ENCODE measurements at regions of chr12 and their contacts with region 1.

Region 1: DNA sequence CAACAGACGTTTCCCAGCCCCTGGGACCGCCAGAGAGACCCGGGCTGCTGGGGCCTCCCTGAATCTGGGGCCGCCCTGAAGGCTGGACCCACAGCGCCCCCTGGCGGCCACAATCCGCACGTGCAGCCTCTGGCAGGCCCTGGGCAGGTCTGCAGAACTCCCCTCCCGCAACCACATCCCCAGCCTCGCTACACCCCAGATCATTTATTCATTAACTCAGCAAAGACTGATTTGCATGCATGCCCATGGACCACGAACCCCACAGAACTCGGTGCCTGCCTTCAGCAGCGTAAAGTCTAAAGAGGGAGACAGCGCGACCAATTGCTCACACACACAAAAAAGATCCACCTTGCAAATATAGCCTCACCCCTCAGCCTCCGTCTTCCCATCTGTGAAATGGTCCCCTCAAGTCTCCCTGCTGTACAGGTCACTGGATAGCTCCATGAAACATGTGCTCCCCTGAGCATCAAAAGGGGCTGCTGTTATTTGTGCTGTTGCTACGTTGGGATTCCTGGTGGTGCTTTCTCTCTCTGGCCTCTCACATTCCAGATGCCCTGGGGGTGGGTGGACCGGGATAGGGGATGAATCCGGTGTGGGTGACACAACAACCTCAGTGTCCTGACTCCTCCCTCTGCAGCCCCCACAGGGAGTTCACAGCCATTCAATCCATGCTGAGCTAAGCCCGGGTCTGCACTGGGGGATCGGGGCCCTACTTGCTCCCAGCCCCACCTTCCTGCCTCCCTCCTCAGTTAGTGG is 96.4 kb downstream of the SCARB1 start:
- DNase-seq: peak; percentile 65
- H3K4me3 Mint-ChIP-seq: no peak overlapping the region
- H3K27ac Mint-ChIP-seq: no peak overlapping the region
- H3K4me1 Mint-ChIP-seq: peaks cover 18% of the 10 kb centered on the region
- H3K27me3 Mint-ChIP-seq: no peaks in the 10 kb centered on the region
- CTCF ChIP-seq: peak; percentile 98

Region 2: GRCh38 chr12:124044809-124045321 is 722.4 kb before region 1 on chr12:
- CTCF ChIA-PET with region 1: interaction called, 10 read pairs
- POLR2A ChIA-PET with region 1: no interaction called
- intact Hi-C with region 1: no loop called
- DNase-seq: no peak
- H3K4me3 Mint-ChIP-seq: no peak overlapping the region
- H3K27ac Mint-ChIP-seq: no peak overlapping the region
- H3K4me1 Mint-ChIP-seq: peaks cover 5% of the 10 kb centered on the region
- H3K27me3 Mint-ChIP-seq: no peaks in the 10 kb centered on the region
- CTCF ChIP-seq: no peak

Region 3: DNA sequence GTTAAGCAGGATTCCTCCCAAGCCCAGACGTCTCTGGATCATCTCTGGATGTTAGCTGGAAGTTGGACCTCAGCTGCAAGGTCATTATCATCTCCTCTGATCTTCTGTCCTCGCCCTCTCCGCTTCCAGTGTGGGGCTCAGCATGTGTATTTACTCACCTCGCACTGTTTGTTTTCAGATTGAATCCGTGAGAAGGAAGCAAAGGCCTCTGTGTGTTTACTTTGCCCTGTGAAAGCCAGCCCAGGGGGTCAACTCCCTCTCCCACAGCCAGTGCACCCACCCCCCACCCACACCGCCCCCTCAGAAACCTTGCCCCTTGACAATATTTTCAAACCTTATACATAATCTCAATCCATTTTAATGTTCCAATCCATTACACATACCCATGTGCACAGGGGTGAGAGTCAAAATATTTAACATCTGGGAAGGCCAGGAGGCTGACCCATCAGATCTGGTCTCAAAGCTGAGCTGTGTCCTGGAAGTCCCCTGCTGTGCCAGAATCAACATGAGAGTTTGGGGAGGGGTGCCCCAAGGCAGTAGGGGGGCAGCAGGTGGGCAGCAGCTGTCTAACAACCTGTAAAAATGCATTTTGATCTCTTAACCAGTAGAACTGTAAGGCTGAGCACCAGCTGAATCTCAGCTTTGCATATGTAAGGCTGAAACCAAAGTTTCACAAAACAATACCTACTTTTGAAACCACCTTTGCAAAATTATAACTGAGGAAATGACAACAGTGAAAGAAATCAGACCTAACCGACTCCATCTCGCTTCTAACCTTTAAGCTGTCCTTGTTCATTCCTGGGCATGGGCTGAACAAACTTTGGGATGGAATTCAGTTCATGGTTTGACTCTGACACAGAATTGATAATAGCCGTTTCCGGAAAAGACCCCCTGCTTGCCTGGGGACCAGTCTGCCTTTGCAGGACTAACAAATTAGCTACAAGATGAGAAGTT is 636.2 kb before region 1 on chr12:
- CTCF ChIA-PET with region 1: no interaction called
- POLR2A ChIA-PET with region 1: no interaction called
- intact Hi-C with region 1: no loop called
- DNase-seq: no peak
- H3K4me3 Mint-ChIP-seq: no peak overlapping the region
- H3K27ac Mint-ChIP-seq: no peak overlapping the region
- H3K4me1 Mint-ChIP-seq: peaks cover under 1% of the 10 kb centered on the region
- H3K27me3 Mint-ChIP-seq: no peaks in the 10 kb centered on the region
- CTCF ChIP-seq: no peak

Region 4: GRCh38 chr12:124388679-124389536 is 378.3 kb before region 1 on chr12:
- CTCF ChIA-PET with region 1: interaction called, 5 read pairs
- POLR2A ChIA-PET with region 1: interaction called, 3 read pairs
- intact Hi-C with region 1: loop called (anchors 10 kb)
- DNase-seq: peak; percentile 83
- H3K4me3 Mint-ChIP-seq: peak overlapping the region; percentile 81
- H3K27ac Mint-ChIP-seq: peak overlapping the region; percentile 69
- H3K4me1 Mint-ChIP-seq: peaks cover 26% of the 10 kb centered on the region
- H3K27me3 Mint-ChIP-seq: no peaks in the 10 kb centered on the region
- CTCF ChIP-seq: no peak

Region 5: GRCh38 chr12:124518051-124518932 is 249.0 kb before region 1 on chr12:
- CTCF ChIA-PET with region 1: interaction called, 10 read pairs
- POLR2A ChIA-PET with region 1: interaction called, 17 read pairs
- intact Hi-C with region 1: loop called (anchors 5 kb)
- DNase-seq: peak; percentile 99
- H3K4me3 Mint-ChIP-seq: peak overlapping the region; percentile 91
- H3K27ac Mint-ChIP-seq: peak overlapping the region; percentile 96
- H3K4me1 Mint-ChIP-seq: peaks cover 39% of the 10 kb centered on the region
- H3K27me3 Mint-ChIP-seq: no peaks in the 10 kb centered on the region
- CTCF ChIP-seq: no peak

Region 6: DNA sequence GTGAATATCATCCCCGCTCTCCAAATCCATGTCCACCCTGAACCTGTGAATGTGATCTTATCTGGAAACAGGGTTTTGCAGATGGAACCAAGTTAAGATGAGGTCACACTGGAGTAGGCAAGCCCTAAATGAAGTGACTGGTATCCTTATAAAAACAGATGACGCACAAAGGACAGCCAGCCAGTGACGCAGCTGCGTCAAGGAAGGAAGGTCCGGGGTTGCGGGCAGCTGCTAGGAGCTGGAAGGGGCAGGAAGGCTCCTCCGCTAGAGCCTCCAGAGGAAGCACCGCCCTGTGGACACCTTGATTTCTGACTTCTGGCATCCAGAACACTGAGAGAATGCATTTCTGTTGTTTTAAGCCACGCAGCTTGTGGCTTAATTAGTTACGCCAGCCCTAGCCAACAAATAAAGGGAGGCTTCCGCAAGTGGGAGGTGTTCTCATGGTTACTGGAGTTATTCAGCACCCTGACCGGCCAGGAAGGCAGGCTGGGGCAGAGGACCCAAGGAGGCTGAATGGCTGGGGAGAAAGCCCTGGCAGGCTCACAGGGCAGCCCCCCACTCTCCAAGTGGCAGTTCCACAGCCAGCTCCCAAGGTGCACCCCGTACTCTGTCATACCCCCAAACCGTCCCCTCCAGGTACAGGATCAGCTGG is 72.3 kb before region 1 on chr12:
- CTCF ChIA-PET with region 1: interaction called, 11 read pairs
- POLR2A ChIA-PET with region 1: interaction called, 4 read pairs
- intact Hi-C with region 1: no loop called
- DNase-seq: peak; percentile 77
- H3K4me3 Mint-ChIP-seq: peak overlapping the region; percentile 14
- H3K27ac Mint-ChIP-seq: no peak overlapping the region
- H3K4me1 Mint-ChIP-seq: peaks cover 19% of the 10 kb centered on the region
- H3K27me3 Mint-ChIP-seq: no peaks in the 10 kb centered on the region
- CTCF ChIP-seq: no peak

Region 7: GRCh38 chr12:124754949-124755800 is 12.1 kb before region 1 on chr12:
- CTCF ChIA-PET with region 1: interaction called, 36 read pairs
- POLR2A ChIA-PET with region 1: interaction called, 23 read pairs
- intact Hi-C with region 1: no loop called
- DNase-seq: peak; percentile 90
- H3K4me3 Mint-ChIP-seq: peak overlapping the region; percentile 56
- H3K27ac Mint-ChIP-seq: peak overlapping the region; percentile 57
- H3K4me1 Mint-ChIP-seq: peaks cover 42% of the 10 kb centered on the region
- H3K27me3 Mint-ChIP-seq: no peaks in the 10 kb centered on the region
- CTCF ChIP-seq: no peak

Region 8: DNA sequence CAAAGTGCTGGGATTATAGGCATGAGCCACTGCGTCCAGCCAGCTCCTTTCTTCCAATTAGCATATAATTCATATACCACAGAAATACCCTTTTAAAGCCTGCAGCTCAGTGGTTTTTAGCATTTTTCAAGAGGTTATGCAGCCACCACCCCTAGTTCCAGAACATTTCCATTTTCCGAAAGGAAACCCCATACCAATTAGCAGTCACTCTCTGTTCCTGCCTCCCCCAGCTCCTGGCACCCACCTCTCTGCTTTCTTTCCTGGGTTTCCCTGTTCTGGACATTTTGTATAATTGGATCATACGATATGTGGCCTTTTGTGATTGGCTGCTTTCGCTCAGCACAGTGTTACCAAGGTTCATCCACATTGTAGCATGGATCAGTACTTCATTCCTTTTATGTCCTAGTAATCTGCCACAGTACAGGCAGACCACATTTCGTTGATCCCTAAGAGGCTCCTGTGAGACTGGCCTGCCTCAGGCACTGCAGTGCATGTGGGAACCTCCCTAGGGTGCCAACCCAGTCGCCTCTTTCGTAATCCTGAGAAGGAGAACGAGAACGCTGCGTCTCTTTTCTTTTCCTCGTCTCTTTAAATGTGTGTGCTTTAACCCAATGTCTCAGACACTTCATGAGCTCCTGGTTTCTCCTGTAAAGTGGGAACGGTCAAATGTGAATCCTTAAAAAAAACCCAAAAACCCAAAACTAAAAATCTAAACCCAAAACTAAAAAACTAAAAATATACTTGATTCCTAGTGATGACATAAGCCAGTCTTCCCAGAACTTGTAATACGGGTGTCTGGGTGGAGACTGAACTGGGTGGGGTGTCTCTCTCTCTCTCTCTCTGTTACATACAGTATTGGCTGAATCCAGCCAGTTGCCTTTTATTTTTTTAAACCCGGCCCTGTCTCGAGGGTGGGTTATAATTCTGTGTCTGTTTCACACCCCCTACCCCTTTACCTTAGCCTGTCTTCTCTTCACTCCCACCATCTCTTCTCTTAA is 312.7 kb after region 1 on chr12:
- CTCF ChIA-PET with region 1: no interaction called
- POLR2A ChIA-PET with region 1: no interaction called
- intact Hi-C with region 1: no loop called
- DNase-seq: peak; percentile 97
- H3K4me3 Mint-ChIP-seq: peak overlapping the region; percentile 56
- H3K27ac Mint-ChIP-seq: peak overlapping the region; percentile 91
- H3K4me1 Mint-ChIP-seq: peaks cover 12% of the 10 kb centered on the region
- H3K27me3 Mint-ChIP-seq: no peaks in the 10 kb centered on the region
- CTCF ChIP-seq: no peak

Measured in MCF 10A (cell line).